ENCODE measurements at regions of chr12 and their contacts with region 1.

Region 1: GRCh38 chr12:68807576-68808387 is at the start of gene MDM2:
- DNase-seq: peak; percentile 94
- ATAC-seq: peak; percentile 87
- H3K4me3 Mint-ChIP-seq: peak within 1 kb of the TSS; percentile 92
- H3K27ac Mint-ChIP-seq: peak within 1 kb of the TSS; percentile 98
- H3K4me1 Mint-ChIP-seq: peaks cover 18% of the 10 kb centered on the region
- H3K27me3 Mint-ChIP-seq: no peaks in the 10 kb centered on the region
- CTCF ChIP-seq: no peak
- total RNA-seq, gene MDM2: 69.8 and 90.8 TPM in 2 replicates

Region 2: GRCh38 chr12:68223083-68223747 is 584.6 kb before region 1 on chr12:
- CTCF ChIA-PET with region 1: no interaction called
- POLR2A ChIA-PET with region 1: no interaction called
- intact Hi-C with region 1: loop called (anchors 5 kb)
- DNase-seq: peak; percentile 29
- ATAC-seq: peak; percentile 99
- H3K4me3 Mint-ChIP-seq: peak overlapping the region; percentile 48
- H3K27ac Mint-ChIP-seq: no peak overlapping the region
- H3K4me1 Mint-ChIP-seq: peaks cover 5% of the 10 kb centered on the region
- H3K27me3 Mint-ChIP-seq: peaks cover 3% of the 10 kb centered on the region
- CTCF ChIP-seq: no peak

Region 3: DNA sequence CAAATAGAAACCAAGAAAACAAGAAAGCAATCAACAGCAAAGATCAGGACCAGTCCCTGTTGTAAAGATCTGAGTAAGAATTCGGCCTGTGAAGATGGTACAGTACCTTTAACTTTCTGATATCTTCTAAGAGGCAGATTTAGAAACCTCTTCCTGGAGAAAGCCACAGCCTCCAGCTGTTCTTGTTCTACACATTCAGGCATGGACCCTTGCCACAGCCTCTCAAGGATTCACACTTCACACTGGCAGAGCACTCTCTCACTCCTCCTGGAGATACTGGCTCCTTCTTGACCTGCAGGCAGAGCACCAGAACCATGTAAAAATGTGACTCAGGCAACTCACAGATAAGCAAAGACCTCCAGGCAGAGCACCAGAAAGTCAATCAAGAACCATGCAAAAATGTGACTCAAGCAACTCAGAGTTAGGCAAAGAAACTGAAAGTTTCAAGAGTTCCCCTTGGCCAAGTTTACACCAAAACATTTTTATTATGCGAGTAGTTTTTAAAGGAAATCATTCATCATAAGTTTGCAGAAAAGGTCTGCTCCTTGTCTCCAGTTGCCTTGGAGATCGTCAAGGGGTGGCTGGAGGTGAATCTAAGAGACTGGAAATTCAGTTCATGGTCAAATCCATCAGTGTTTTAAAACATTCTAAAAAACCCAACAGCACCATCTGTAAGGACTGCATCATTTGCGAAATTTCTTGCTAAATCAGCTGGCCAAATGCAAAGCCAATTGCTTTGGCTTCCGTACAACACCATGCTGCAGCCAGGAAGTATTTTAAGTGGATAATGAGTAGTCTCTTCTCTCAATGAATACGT is 356.3 kb before region 1 on chr12:
- CTCF ChIA-PET with region 1: no interaction called
- POLR2A ChIA-PET with region 1: no interaction called
- intact Hi-C with region 1: loop called (anchors 10 kb)
- DNase-seq: peak; percentile 22
- ATAC-seq: peak; percentile 78
- H3K4me3 Mint-ChIP-seq: peak overlapping the region; percentile 76
- H3K27ac Mint-ChIP-seq: peak overlapping the region; percentile 85
- H3K4me1 Mint-ChIP-seq: peaks cover 94% of the 10 kb centered on the region
- H3K27me3 Mint-ChIP-seq: no peaks in the 10 kb centered on the region
- CTCF ChIP-seq: no peak

Region 4: DNA sequence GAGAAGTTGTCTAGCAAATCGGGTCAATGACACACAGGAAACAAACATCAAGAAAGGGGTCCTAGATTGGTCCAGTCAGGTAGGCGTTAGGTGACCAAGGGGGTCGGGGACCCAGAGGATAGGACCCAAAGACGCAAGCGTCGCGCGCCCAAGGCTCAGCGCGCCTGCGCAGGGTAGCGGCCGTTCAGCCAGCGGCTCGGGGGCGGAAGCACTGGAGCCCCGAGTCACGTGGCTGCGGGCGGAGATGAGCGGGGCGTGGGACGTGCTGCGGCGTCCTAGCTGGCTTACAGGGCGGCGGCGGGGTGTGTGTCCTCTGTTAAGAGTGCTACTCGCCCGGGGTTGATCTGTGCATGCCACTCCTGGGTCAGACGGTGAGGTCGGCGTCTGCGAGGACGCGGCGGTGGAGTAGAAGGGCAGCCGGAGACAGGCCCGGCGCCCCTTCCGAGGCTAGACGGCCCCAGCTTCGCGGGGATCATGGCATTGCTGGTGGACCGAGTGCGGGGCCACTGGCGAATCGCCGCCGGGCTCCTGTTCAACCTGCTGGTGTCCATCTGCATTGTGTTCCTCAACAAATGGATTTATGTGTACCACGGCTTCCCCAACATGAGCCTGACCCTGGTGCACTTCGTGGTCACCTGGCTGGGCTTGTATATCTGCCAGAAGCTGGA is 61.7 kb before region 1 on chr12 and contains the start of gene SLC35E3:
- CTCF ChIA-PET with region 1: interaction called, 4 read pairs
- POLR2A ChIA-PET with region 1: interaction called, 62 read pairs
- intact Hi-C with region 1: loop called (anchors 1 kb)
- DNase-seq: peak; percentile 88
- ATAC-seq: peak; percentile 96
- H3K4me3 Mint-ChIP-seq: peak within 1 kb of the TSS; percentile 98
- H3K27ac Mint-ChIP-seq: peak within 1 kb of the TSS; percentile 95
- H3K4me1 Mint-ChIP-seq: peaks cover 50% of the 10 kb centered on the region
- H3K27me3 Mint-ChIP-seq: no peaks in the 10 kb centered on the region
- CTCF ChIP-seq: no peak
- total RNA-seq, gene SLC35E3: 7.8 and 9.5 TPM in 2 replicates

Region 5: DNA sequence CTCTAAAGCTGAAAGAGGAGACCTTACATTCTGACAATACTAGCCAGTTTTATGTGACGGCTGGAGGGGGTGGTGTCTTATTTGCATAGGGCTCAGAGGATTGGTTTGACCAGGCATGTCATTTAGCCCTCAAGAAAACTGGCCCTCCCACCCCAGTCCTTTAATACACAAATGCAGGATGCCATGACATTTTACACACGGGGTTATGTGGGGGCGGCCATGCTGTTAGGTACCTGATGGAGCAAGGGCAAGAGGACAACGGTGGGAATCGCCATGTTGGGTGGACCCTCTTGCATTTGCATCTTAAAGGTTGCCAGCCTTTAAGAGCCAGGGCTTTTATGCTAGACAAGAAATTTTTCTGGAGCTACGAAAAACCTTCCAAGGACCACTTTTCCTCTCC is 23.5 kb after region 1 on chr12:
- CTCF ChIA-PET with region 1: interaction called, 8 read pairs
- POLR2A ChIA-PET with region 1: interaction called, 7 read pairs
- intact Hi-C with region 1: loop called (anchors 1 kb)
- DNase-seq: no peak
- ATAC-seq: no peak
- H3K4me3 Mint-ChIP-seq: no peak overlapping the region
- H3K27ac Mint-ChIP-seq: no peak overlapping the region
- H3K4me1 Mint-ChIP-seq: peaks cover 5% of the 10 kb centered on the region
- H3K27me3 Mint-ChIP-seq: no peaks in the 10 kb centered on the region
- CTCF ChIP-seq: no peak

Region 6: GRCh38 chr12:69359531-69360347 is 552.0 kb after region 1 on chr12 and contains the start of gene YEATS4:
- CTCF ChIA-PET with region 1: no interaction called
- POLR2A ChIA-PET with region 1: no interaction called
- intact Hi-C with region 1: loop called (anchors 5 kb)
- DNase-seq: peak; percentile 82
- ATAC-seq: peak; percentile 81
- H3K4me3 Mint-ChIP-seq: peak within 1 kb of the TSS; percentile 88
- H3K27ac Mint-ChIP-seq: peak within 1 kb of the TSS; percentile 81
- H3K4me1 Mint-ChIP-seq: peaks cover 20% of the 10 kb centered on the region
- H3K27me3 Mint-ChIP-seq: no peaks in the 10 kb centered on the region
- CTCF ChIP-seq: no peak
- total RNA-seq, gene YEATS4: 14.9 and 19.3 TPM in 2 replicates

Region 7: DNA sequence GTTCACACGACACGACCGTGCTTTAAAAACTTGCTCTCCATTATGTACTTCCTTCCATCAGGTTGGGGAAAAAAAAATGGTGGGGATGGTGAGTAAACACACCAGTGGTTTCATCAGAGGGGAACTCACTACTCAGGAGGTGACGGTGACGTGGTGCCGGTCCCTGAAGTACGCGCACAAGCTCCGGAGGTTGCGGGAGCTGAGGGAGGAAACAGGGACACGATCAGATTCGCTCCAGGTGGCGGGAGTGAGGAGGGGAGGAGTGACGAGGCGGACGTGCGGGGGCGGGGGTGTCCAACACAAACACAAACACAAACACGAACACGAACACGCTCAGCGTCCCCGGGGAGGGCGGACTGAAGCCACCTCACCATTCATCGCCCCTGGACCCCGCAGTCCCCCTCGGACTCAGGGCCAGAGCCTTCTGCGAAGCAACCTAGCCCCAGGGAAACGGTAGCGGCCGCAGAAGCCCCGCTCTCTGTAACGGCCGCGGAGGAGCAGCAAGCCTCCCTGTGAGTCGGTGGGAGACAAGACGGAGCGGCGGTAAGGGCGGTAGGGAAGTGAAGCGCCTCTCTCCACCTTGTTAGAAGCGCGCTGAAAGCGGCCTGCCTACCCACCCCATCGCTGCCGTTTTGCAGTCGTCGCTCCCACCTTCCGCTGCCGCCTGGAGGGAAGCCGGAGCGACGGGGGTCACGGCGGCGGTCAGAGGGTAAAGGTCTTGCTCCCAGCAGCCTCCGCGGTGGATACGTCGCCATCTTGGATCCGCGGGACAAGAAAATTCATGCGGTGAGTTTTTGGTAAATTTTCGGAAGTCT is 1435.1 kb after region 1 on chr12 and contains the start of gene CNOT2:
- CTCF ChIA-PET with region 1: no interaction called
- POLR2A ChIA-PET with region 1: no interaction called
- intact Hi-C with region 1: loop called (anchors 5 kb)
- DNase-seq: peak; percentile 86
- ATAC-seq: peak; percentile 88
- H3K4me3 Mint-ChIP-seq: peak within 1 kb of the TSS; percentile 99
- H3K27ac Mint-ChIP-seq: peak within 1 kb of the TSS; percentile 99
- H3K4me1 Mint-ChIP-seq: peaks cover 65% of the 10 kb centered on the region
- H3K27me3 Mint-ChIP-seq: no peaks in the 10 kb centered on the region
- CTCF ChIP-seq: no peak
- total RNA-seq, gene CNOT2: 92.4 and 98.1 TPM in 2 replicates